ENCODE measurements at regions of chr2 and their contacts with region 1.

Region 1: DNA sequence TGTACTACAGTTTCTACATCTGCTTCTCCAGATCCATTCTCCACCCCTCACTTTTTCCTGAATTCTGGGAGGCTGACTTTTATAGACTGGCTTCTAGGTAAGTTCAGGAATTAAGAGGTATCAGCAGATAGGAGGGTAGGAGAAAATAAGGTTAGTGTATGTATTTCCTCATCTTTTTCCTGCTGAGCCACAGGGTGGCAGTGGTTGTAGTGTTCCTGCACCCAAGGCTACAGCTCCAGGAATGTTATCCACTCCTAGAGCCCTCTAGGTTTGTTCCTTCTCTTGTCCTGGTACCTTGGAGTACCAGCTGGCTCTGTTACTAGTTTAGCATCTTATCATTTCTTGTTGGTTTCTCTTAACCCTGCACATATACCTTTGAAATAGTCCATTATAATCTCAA is 40.7 kb upstream of the C2orf66 start:
- DNase-seq: peak; percentile 26
- H3K4me3 ChIP-seq: no peak overlapping the region
- H3K27ac ChIP-seq: no peak overlapping the region
- H3K4me1 ChIP-seq: no peaks in the 10 kb centered on the region
- H3K27me3 ChIP-seq: no peaks in the 10 kb centered on the region
- CTCF ChIP-seq: peak; percentile 9 to 38

Region 2: GRCh38 chr2:196719110-196719872 is 130.6 kb before region 1 on chr2:
- CTCF ChIA-PET with region 1: no interaction called
- dilution Hi-C with region 1: no loop called
- in situ Hi-C with region 1: no loop called
- intact Hi-C with region 1: no loop called
- DNase-seq: no peak
- H3K4me3 ChIP-seq: no peak overlapping the region
- H3K27ac ChIP-seq: no peak overlapping the region
- H3K4me1 ChIP-seq: no peaks in the 10 kb centered on the region
- H3K27me3 ChIP-seq: no peaks in the 10 kb centered on the region
- CTCF ChIP-seq: peak in 1 of 2 donors; percentile 9

Region 3: GRCh38 chr2:196980473-196980872 is 130.6 kb after region 1 on chr2:
- CTCF ChIA-PET with region 1: no interaction called
- dilution Hi-C with region 1: no loop called
- in situ Hi-C with region 1: no loop called
- intact Hi-C with region 1: no loop called
- DNase-seq: no peak
- H3K4me3 ChIP-seq: no peak overlapping the region
- H3K27ac ChIP-seq: no peak overlapping the region
- H3K4me1 ChIP-seq: no peaks in the 10 kb centered on the region
- H3K27me3 ChIP-seq: no peaks in the 10 kb centered on the region
- CTCF ChIP-seq: no peak

Region 4: GRCh38 chr2:197001921-197002320 is 152.0 kb after region 1 on chr2:
- CTCF ChIA-PET with region 1: no interaction called
- dilution Hi-C with region 1: no loop called
- in situ Hi-C with region 1: no loop called
- intact Hi-C with region 1: no loop called
- DNase-seq: peak; percentile 18
- H3K4me3 ChIP-seq: no peak overlapping the region
- H3K27ac ChIP-seq: no peak overlapping the region
- H3K4me1 ChIP-seq: no peaks in the 10 kb centered on the region
- H3K27me3 ChIP-seq: no peaks in the 10 kb centered on the region
- CTCF ChIP-seq: no peak

Region 5: DNA sequence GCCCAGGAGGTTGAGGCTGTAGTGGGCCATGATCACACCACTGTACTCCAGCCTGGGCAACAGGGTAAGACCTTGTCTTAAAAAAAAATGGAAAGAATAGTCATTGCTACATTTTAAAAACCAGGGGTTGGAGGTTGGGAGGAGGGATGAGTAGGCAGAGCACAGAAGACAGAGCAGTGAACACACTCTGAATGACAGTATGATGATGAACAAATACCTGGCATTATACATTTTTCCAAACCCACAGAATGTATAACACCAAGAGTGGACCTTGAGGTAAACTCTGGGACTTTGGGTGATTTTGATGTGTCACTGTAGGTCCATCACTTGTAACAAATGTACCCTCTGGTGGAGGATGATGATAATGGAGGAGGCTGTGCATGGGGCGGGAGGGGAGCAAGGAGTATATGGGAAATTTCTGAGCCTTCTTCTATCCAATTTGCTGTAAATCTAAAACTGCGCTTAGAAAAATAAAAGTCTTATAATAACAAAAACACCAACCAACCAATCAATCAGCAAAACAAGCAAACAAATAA is 188.0 kb after region 1 on chr2:
- CTCF ChIA-PET with region 1: no interaction called
- dilution Hi-C with region 1: no loop called
- in situ Hi-C with region 1: no loop called
- intact Hi-C with region 1: loop called (anchors 1 kb)
- DNase-seq: peak; percentile 39
- H3K4me3 ChIP-seq: no peak overlapping the region
- H3K27ac ChIP-seq: no peak overlapping the region
- H3K4me1 ChIP-seq: no peaks in the 10 kb centered on the region
- H3K27me3 ChIP-seq: no peaks in the 10 kb centered on the region
- CTCF ChIP-seq: peak in 1 of 2 donors; percentile 40

Region 6: DNA sequence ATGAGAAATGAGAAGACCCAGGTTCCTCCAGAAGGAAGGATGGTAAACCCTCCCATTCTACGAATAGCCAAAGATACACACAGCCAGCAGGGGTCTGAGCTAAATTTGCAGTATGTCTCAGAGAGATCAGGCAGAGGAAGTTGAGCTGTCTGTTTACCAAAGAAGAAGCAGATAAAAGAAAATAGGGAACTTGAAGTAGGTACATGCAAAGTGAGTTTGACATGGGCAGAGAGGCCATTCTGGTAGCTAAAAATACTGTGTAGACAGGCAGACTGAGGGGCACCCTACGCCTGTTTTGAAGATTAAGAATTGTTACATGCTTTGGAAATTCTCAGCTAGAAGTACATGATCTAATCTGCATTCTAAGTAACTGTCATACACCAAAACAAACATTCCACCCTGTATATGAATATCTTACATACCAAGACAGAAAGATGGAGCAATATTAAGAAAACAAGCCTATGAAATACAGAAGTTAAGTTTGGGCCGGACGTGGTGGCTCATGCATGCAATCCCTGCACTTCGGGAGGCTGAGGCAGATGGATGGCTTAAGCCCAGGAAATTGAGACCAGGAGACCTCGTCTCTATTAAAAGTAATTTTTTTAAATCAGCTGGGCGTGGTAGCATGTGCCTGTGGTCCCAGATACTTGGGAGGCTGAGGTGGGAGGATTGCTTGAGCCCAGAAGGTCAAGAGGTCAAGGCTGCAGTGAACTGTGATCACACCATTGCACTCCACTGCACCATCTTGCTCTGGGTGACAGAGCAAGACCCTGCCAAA is 302.7 kb after region 1 on chr2:
- CTCF ChIA-PET with region 1: no interaction called
- dilution Hi-C with region 1: no loop called
- in situ Hi-C with region 1: no loop called
- intact Hi-C with region 1: no loop called
- DNase-seq: no peak
- H3K4me3 ChIP-seq: no peak overlapping the region
- H3K27ac ChIP-seq: no peak overlapping the region
- H3K4me1 ChIP-seq: no peaks in the 10 kb centered on the region
- H3K27me3 ChIP-seq: no peaks in the 10 kb centered on the region
- CTCF ChIP-seq: no peak